HepG2 (cell line): ENCODE measurements at regions of chr6 and their contacts with region 1.

Region 1: GRCh38 chr6:31243508-31243907 is 28.4 kb downstream of the HLA-C start:
- DNase-seq: no peak
- ATAC-seq: no peak
- H3K4me3 ChIP-seq: no peak overlapping the region
- H3K27ac ChIP-seq: no peak overlapping the region
- H3K4me1 ChIP-seq: peaks cover 9% of the 10 kb centered on the region; the same call in 1 of the 2 replicates
- H3K27me3 ChIP-seq: peaks cover 0 to 17% of the 10 kb centered on the region in 2 experiments; a peak in 2 of 5 replicates
- CTCF ChIP-seq: no peak
- EP300 ChIP-seq: no peak
- POLR2A ChIP-seq: no peak
- RAD21 ChIP-seq: no peak

Region 2: GRCh38 chr6:31317036-31317435 is 73.5 kb after region 1 on chr6:
- CTCF ChIA-PET with region 1: no interaction called
- POLR2A ChIA-PET with region 1: no interaction called
- in situ Hi-C with region 1: loop called (anchors 5 kb)
- intact Hi-C with region 1: no loop called
- DNase-seq: no peak
- ATAC-seq: no peak
- H3K4me3 ChIP-seq: no peak overlapping the region
- H3K27ac ChIP-seq: no peak overlapping the region
- H3K4me1 ChIP-seq: no peaks in the 10 kb centered on the region
- H3K27me3 ChIP-seq: peaks cover 0 to 10% of the 10 kb centered on the region in 2 experiments; a peak in 2 of 5 replicates
- CTCF ChIP-seq: no peak
- EP300 ChIP-seq: no peak
- POLR2A ChIP-seq: no peak
- RAD21 ChIP-seq: no peak